ENCODE measurements at regions of chr6 and their contacts with region 1.

Region 1: GRCh38 chr6:100099189-100100074 is 105.4 kb upstream of the MCHR2 start:
- DNase-seq: no peak
- ATAC-seq: peak in 1 of 2 donors; percentile 46
- H3K4me3 ChIP-seq: no peak overlapping the region
- H3K27ac ChIP-seq: no peak overlapping the region
- H3K4me1 ChIP-seq: no peaks in the 10 kb centered on the region
- H3K27me3 ChIP-seq: no peaks in the 10 kb centered on the region
- CTCF ChIP-seq: peak; percentile 49

Region 2: DNA sequence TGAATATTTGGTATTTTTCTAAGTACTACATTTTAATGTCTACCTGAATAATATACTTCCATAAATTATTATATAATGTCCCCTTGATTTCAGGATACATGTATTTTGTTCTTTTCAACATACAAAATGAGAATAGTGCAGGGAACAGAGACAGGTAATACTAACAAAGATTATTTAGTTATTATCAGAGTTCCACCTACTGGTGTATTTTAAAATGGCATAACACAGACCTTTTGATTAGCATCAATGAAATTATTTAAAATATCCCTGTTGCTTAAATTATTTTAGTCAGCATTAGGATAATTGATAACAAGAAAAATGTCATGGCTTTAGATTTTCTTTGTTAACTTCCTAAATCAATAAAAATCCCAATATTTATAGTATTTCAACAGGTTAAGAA is 308.8 kb before region 1 on chr6:
- intact Hi-C with region 1: no loop called
- DNase-seq: no peak
- ATAC-seq: no peak
- H3K4me3 ChIP-seq: no peak overlapping the region
- H3K27ac ChIP-seq: no peak overlapping the region
- H3K4me1 ChIP-seq: no peaks in the 10 kb centered on the region
- H3K27me3 ChIP-seq: no peaks in the 10 kb centered on the region
- CTCF ChIP-seq: no peak

Region 3: DNA sequence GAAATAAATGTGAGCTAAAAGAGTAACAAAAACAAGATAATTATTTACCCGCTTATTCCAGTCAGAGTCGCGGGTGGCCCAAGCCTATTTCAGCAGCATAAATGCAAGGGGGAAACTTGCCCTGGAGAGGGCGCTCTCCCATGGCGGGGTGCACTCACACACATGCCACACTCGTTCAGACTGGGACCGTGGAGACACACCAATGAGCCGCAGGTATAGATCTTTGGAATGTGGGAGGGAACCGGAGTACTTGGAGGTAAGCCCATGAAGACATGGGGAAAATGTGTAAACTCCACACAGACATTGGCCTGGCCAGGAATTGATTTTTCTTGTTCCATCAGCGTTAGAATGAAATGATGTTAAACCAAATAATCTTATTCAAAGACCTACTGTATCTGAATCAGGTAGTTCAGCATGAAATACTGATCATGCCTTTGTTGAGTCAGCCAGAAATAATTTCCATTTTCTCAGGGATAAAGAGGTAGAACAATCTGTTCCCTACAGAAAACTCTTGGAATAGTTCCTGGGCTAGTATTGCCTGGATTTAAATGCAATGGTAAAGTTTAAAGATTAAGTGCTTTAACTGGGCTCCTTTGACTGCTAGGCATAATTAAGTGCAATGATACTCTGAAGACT is 296.9 kb before region 1 on chr6:
- intact Hi-C with region 1: no loop called
- DNase-seq: no peak
- ATAC-seq: no peak
- H3K4me3 ChIP-seq: no peak overlapping the region
- H3K27ac ChIP-seq: no peak overlapping the region
- H3K4me1 ChIP-seq: no peaks in the 10 kb centered on the region
- H3K27me3 ChIP-seq: no peaks in the 10 kb centered on the region
- CTCF ChIP-seq: no peak

Region 4: GRCh38 chr6:99868074-99868702 is 231.2 kb before region 1 on chr6:
- intact Hi-C with region 1: loop called (anchors 10 kb)
- DNase-seq: peak; percentile 76
- ATAC-seq: peak; percentile 75 to 82
- H3K4me3 ChIP-seq: no peak overlapping the region
- H3K27ac ChIP-seq: no peak overlapping the region
- H3K4me1 ChIP-seq: no peaks in the 10 kb centered on the region
- H3K27me3 ChIP-seq: no peaks in the 10 kb centered on the region
- CTCF ChIP-seq: peak; percentile 77

Region 5: GRCh38 chr6:100001915-100002388 is 97.5 kb before region 1 on chr6:
- intact Hi-C with region 1: loop called (anchors 5 kb)
- DNase-seq: peak; percentile 52
- ATAC-seq: peak; percentile 89
- H3K4me3 ChIP-seq: no peak overlapping the region
- H3K27ac ChIP-seq: no peak overlapping the region
- H3K4me1 ChIP-seq: no peaks in the 10 kb centered on the region
- H3K27me3 ChIP-seq: peaks cover 6% of the 10 kb centered on the region
- CTCF ChIP-seq: peak; percentile 89

Region 6: GRCh38 chr6:100050550-100050949 is 48.9 kb before region 1 on chr6:
- intact Hi-C with region 1: no loop called
- DNase-seq: no peak
- ATAC-seq: no peak
- H3K4me3 ChIP-seq: no peak overlapping the region
- H3K27ac ChIP-seq: no peak overlapping the region
- H3K4me1 ChIP-seq: no peaks in the 10 kb centered on the region
- H3K27me3 ChIP-seq: no peaks in the 10 kb centered on the region
- CTCF ChIP-seq: no peak

Measured in lower lobe of right lung (tissue), 2 donors.